ENCODE measurements at regions of chr12 and their contacts with region 1.

Region 1: GRCh38 chr12:77925536-77926108 is 94.9 kb downstream of the NAV3 start:
- DNase-seq: peak; percentile 52 to 95 (median 70)

Region 2: DNA sequence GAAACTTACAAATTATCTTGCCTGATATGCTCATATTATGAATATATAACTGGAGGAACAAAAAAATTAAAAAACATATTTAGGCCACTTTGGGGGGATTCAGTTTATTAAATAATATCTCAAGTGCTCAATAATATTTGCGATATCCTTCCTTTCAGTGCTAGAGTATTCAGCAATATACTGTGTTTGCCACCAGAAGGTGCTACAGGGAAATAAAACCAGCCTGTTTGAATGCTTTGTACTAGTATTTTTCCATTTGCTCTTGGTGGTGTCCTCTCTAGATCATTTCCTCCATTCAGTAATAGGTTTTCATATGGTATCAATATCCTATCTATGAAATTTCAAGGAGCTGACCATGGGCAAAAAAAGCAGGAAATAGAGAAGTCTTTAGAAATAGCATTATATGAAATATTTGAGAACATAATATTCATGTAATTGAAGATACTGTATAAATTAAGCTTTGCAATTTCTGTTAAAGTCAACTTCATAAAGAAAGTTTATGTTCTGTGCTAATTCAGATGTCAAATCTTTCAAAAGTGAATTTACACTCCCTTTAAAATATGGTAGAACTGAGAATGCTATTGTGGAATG is 201.2 kb before region 1 on chr12:
- intact Hi-C with region 1: loop called (anchors 2 kb)
- DNase-seq: no peak

Measured in posterior cingulate gyrus (tissue), 11 donors.